ENCODE measurements at regions of chrX and their contacts with region 1.

Region 1: GRCh38 chrX:30865015-30865414 is 24.0 kb downstream of the TAB3 start:
- DNase-seq: no peak
- ATAC-seq: no peak
- H3K4me3 ChIP-seq: no peak overlapping the region
- H3K27ac ChIP-seq: no peak overlapping the region
- H3K4me1 ChIP-seq: no peaks in the 10 kb centered on the region
- H3K27me3 ChIP-seq: no peaks in the 10 kb centered on the region
- CTCF ChIP-seq: peak; percentile 38

Region 2: DNA sequence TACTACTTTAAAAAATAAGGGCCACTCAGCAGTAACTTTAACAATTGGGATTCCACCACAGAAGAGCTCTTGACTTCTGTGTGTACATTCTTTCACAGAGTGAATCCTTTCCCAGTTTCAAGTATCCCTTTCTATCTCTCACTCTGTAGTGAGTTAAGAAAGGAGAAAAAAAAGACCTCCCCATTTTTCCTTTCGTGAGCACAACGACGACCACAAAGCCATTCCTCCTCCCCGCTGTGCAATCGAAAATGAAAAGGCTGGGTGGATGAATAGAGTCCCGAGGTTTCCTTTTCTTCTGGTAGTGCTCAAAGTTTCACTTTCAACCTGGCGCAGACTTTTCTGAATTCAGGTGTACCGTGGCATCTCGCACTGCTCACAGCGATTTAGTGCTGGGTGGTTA is 33.9 kb before region 1 on chrX:
- CTCF ChIA-PET with region 1: no interaction called
- POLR2A ChIA-PET with region 1: no interaction called
- in situ Hi-C with region 1: no loop called
- intact Hi-C with region 1: no loop called
- DNase-seq: no peak
- ATAC-seq: no peak
- H3K4me3 ChIP-seq: no peak overlapping the region
- H3K27ac ChIP-seq: no peak overlapping the region
- H3K4me1 ChIP-seq: no peaks in the 10 kb centered on the region
- H3K27me3 ChIP-seq: no peaks in the 10 kb centered on the region
- CTCF ChIP-seq: no peak

Region 3: GRCh38 chrX:31572360-31572759 is 707.3 kb after region 1 on chrX:
- CTCF ChIA-PET with region 1: interaction called, 10 read pairs
- POLR2A ChIA-PET with region 1: no interaction called
- in situ Hi-C with region 1: no loop called
- intact Hi-C with region 1: no loop called
- DNase-seq: no peak
- ATAC-seq: no peak
- H3K4me3 ChIP-seq: no peak overlapping the region
- H3K27ac ChIP-seq: no peak overlapping the region
- H3K4me1 ChIP-seq: no peaks in the 10 kb centered on the region
- H3K27me3 ChIP-seq: no peaks in the 10 kb centered on the region
- CTCF ChIP-seq: no peak

Measured in Panc1 (cell line).